Heart left ventricle (tissue), 16 donors: ENCODE measurements at regions of chr20 and their contacts with region 1.

Region 1: GRCh38 chr20:3679749-3680700 is 1.8 kb downstream of the ADAM33 start:
- DNase-seq: peak in 3 of 5 donors; percentile 67 to 71 (median 71)
- ATAC-seq: peak; percentile 13 to 68 (median 36)
- H3K4me3 ChIP-seq: peak overlapping the region in 9 of 12 donors; percentile 52 to 71 (median 58)
- H3K27ac ChIP-seq: peak overlapping the region in 10 of 12 donors; percentile 20 to 92 (median 66)
- H3K4me1 ChIP-seq: peaks cover 0 to 53% (median 24%) of the 10 kb centered on the region in 12 donors
- H3K27me3 ChIP-seq: peaks cover 0 to 42% (median 14%) of the 10 kb centered on the region in 9 donors
- CTCF ChIP-seq: no peak
- POLR2A ChIP-seq: no peak

Region 2: DNA sequence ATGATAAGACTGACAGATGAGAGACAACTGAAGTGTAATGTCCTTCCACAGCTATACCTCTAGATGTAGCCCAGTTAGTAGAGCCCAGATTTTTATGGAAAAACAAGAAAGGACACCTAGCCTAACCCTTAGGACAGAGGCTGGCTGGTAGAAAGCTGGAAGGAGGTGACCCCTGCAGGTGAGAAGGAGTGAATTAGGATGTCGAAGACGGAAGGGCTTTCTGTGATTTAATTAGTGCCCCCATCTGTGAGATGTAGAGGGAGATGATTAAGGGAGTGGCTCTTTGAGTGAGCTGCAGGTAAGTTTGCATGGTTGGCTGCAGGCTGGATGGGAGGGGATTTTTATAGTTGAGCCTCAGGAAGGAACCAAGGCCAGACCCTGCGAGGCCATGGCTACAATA is 99.6 kb before region 1 on chr20:
- intact Hi-C with region 1: no loop called
- DNase-seq: no peak
- ATAC-seq: no peak
- H3K4me3 ChIP-seq: no peak overlapping the region
- H3K27ac ChIP-seq: no peak overlapping the region
- H3K4me1 ChIP-seq: no peaks in the 10 kb centered on the region
- H3K27me3 ChIP-seq: no peaks in the 10 kb centered on the region
- CTCF ChIP-seq: peak in 1 of 12 donors; percentile 9
- POLR2A ChIP-seq: no peak

Region 3: DNA sequence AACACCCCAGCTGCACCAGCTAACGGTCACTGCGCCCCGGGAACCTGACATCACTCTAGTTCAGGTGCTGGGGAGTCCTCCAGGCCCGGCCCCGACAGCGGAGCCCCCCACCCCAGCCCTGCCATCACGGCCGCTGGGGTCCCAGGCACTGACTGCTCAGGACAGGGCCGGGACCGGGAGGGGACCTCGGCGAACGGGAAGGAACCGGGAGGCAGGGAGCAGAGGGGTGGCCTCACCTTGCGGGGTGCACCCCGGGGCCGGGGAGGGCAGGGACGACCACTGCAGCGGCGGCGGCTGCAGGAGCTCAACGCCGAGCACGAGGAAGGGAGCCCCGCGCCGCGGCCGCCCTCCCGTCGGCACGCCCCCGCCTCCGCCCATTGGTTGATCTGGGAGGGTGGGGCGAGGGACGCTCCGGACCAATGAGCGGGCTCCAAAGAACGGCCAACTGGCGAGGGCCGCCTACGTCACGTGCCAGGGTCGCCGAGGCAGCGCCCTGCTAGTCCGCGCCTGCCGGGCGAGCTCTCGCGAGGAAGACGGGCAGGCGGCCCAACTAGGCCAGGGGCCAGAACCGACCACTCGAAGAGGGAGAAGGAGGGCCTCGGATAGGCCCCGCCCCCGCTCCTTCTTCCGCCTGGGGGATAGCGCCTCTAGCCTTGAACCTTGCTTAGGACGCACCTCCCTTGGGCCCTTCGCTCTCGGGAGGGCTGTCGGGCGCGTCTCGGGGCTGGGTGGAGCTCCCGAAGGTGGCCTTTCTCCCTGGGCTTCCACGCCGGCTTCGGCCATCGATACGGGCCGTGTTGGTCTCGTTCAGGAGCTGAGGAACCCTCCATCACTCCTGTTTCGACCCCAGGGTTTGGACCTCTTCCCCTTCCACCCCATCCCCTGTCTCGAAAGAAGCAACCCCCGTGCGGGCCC is 87.7 kb after region 1 on chr20 and contains the start of gene ADISSP:
- intact Hi-C with region 1: loop called in 4 of 10 experiments (anchors 5 to 10 kb)
- DNase-seq: peak; percentile 99 to 100 (median 99)
- ATAC-seq: peak; percentile 96 to 98 (median 96)
- H3K4me3 ChIP-seq: peak within 1 kb of the TSS; percentile 49 to 78 (median 69)
- H3K27ac ChIP-seq: peak within 1 kb of the TSS; percentile 54 to 96 (median 86)
- H3K4me1 ChIP-seq: peaks cover 0 to 47% (median 22%) of the 10 kb centered on the region in 12 donors
- H3K27me3 ChIP-seq: no peaks in the 10 kb centered on the region
- CTCF ChIP-seq: peak in 4 of 12 donors; percentile 21 to 44 (median 28)
- POLR2A ChIP-seq: peak in 1 of 2 donors; percentile 69
- total RNA-seq, gene ADISSP: 7.8 to 22.2 (median 13.7) TPM

Region 4: GRCh38 chr20:3854462-3854871 is 174.4 kb after region 1 on chr20:
- intact Hi-C with region 1: loop called in 1 of 10 experiments (anchors 10 kb)
- DNase-seq: no peak
- ATAC-seq: peak in 2 of 4 donors; percentile 21 to 36
- H3K4me3 ChIP-seq: no peak overlapping the region
- H3K27ac ChIP-seq: peak overlapping the region in 1 of 12 donors; percentile 19
- H3K4me1 ChIP-seq: peaks cover 0 to 14% (median 5%) of the 10 kb centered on the region in 12 donors
- H3K27me3 ChIP-seq: no peaks in the 10 kb centered on the region
- CTCF ChIP-seq: no peak
- POLR2A ChIP-seq: no peak

Region 5: GRCh38 chr20:4082406-4083097 is 402.5 kb after region 1 on chr20:
- intact Hi-C with region 1: loop called in 2 of 10 experiments (anchors 5 kb)
- DNase-seq: peak in 4 of 5 donors; percentile 49 to 61 (median 51)
- ATAC-seq: peak in 3 of 4 donors; percentile 37 to 54 (median 50)
- H3K4me3 ChIP-seq: no peak overlapping the region
- H3K27ac ChIP-seq: peak overlapping the region in 4 of 12 donors; percentile 54 to 80 (median 64)
- H3K4me1 ChIP-seq: peaks cover 0 to 42% (median 8%) of the 10 kb centered on the region in 12 donors
- H3K27me3 ChIP-seq: no peaks in the 10 kb centered on the region
- CTCF ChIP-seq: no peak
- POLR2A ChIP-seq: no peak